Ovary (tissue), 10 donors: ENCODE measurements at regions of chr1 and their contacts with region 1.

Region 1: GRCh38 chr1:197546989-197547388 is 228.3 kb downstream of the DENND1B start:
- DNase-seq: no peak
- H3K4me3 ChIP-seq: no peak overlapping the region
- H3K27ac ChIP-seq: no peak overlapping the region
- H3K4me1 ChIP-seq: no peaks in the 10 kb centered on the region
- H3K27me3 ChIP-seq: no peaks in the 10 kb centered on the region
- CTCF ChIP-seq: no peak
- EP300 ChIP-seq: no peak
- POLR2A ChIP-seq: no peak

Region 2: GRCh38 chr1:197736644-197737043 is 189.7 kb after region 1 on chr1:
- intact Hi-C with region 1: no loop called
- DNase-seq: no peak
- H3K4me3 ChIP-seq: no peak overlapping the region
- H3K27ac ChIP-seq: no peak overlapping the region
- H3K4me1 ChIP-seq: peaks cover 2% of the 10 kb centered on the region
- H3K27me3 ChIP-seq: no peaks in the 10 kb centered on the region
- CTCF ChIP-seq: no peak
- EP300 ChIP-seq: no peak
- POLR2A ChIP-seq: no peak

Region 3: DNA sequence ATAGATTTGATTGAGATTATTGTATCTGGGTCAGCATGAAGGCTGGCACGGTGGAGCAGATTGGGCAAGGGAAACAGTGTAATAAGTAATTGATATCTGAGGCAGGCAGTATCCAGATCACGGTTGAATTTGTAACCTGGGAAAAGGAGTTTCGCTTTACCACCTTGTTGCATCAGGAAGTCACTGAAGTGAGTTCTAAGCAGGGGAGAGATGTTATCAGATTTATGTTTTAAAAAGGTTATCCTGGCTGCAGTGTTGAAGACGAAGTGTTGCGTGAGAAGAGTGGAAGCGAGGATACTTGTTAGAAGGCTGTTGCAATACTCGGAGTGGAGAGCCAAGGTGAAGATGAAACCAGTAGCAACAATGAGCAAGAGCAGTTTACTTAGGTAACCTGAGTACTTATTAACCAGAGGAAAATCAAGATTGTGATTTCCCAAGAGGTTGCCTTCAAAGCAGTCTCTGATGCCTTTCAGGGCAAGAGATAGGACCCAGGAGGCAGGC is 448.0 kb after region 1 on chr1:
- intact Hi-C with region 1: loop called in 1 of 4 experiments (anchors 5 kb)
- DNase-seq: no peak
- H3K4me3 ChIP-seq: no peak overlapping the region
- H3K27ac ChIP-seq: no peak overlapping the region
- H3K4me1 ChIP-seq: no peaks in the 10 kb centered on the region
- H3K27me3 ChIP-seq: no peaks in the 10 kb centered on the region
- CTCF ChIP-seq: no peak
- EP300 ChIP-seq: no peak
- POLR2A ChIP-seq: no peak